Activated CD4-positive, alpha-beta memory T cell treated with anti-CD3 and anti-CD28 coated beads, Interleukin-2, amount 10 ng/mL, durations not matched to agents 7 days and 5 days (primary cell): ENCODE measurements at regions of chr20 and their contacts with region 1.

Region 1: DNA sequence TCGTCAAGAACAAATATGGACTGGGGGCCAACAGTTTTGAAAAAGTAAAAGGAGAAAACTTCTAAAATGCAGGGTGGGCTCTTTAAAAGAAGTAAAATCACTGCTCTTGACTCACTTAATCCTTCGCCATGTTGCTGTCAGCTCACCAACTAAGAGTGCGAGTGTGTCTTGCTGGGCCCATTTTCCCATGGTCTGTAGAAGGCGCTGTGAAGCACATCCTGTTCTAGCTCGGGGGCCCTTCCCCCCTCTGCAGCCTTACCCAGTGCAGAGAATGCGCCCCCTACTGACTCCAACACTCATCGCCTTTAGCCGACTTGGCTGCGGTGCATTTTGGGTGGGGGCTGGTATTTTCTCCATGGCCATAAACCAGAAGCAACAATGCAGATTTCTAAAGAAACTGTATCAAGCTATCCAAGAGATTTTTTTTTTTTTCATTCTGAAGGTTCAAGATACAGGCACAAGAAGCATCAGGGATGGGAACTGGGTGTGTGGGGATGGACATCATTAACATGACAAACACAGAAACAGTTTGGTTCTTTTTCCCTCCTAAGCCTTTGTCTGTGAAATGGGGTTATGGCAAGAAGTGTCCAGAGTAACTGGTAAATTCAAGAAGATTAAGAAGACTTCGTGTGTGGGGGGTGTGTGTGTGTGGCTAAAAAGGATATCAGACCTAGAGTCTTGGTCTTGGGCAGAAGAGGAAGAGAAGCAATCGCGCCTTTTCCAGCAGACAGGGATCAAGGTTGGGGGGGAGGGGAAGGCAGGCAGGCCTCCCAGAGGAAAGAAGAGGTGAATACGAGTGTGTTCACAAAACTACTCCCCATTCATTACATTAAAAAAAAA is 1.7 kb downstream of the ADNP start:
- DNase-seq: peak; percentile 96
- H3K4me3 Mint-ChIP-seq: peak overlapping the region; percentile 91
- H3K27ac Mint-ChIP-seq: peak overlapping the region; percentile 96
- H3K4me1 Mint-ChIP-seq: peaks cover 56% of the 10 kb centered on the region
- H3K27me3 Mint-ChIP-seq: no peaks in the 10 kb centered on the region

Region 2: GRCh38 chr20:50690634-50691572 is 238.6 kb before region 1 on chr20 and contains the start of gene RIPOR3:
- CTCF ChIA-PET with region 1: no interaction called
- POLR2A ChIA-PET with region 1: no interaction called
- DNase-seq: no peak
- H3K4me3 Mint-ChIP-seq: no peak within 1 kb of the TSS
- H3K27ac Mint-ChIP-seq: no peak within 1 kb of the TSS
- H3K4me1 Mint-ChIP-seq: peaks cover 7% of the 10 kb centered on the region
- H3K27me3 Mint-ChIP-seq: peaks cover 53% of the 10 kb centered on the region
- total RNA-seq, gene RIPOR3: not detected

Region 3: GRCh38 chr20:50815162-50815989 is 114.1 kb before region 1 on chr20:
- CTCF ChIA-PET with region 1: interaction called, 15 read pairs
- POLR2A ChIA-PET with region 1: interaction called, 9 read pairs
- DNase-seq: no peak
- H3K4me3 Mint-ChIP-seq: no peak overlapping the region
- H3K27ac Mint-ChIP-seq: no peak overlapping the region
- H3K4me1 Mint-ChIP-seq: peaks cover 30% of the 10 kb centered on the region
- H3K27me3 Mint-ChIP-seq: no peaks in the 10 kb centered on the region

Region 4: DNA sequence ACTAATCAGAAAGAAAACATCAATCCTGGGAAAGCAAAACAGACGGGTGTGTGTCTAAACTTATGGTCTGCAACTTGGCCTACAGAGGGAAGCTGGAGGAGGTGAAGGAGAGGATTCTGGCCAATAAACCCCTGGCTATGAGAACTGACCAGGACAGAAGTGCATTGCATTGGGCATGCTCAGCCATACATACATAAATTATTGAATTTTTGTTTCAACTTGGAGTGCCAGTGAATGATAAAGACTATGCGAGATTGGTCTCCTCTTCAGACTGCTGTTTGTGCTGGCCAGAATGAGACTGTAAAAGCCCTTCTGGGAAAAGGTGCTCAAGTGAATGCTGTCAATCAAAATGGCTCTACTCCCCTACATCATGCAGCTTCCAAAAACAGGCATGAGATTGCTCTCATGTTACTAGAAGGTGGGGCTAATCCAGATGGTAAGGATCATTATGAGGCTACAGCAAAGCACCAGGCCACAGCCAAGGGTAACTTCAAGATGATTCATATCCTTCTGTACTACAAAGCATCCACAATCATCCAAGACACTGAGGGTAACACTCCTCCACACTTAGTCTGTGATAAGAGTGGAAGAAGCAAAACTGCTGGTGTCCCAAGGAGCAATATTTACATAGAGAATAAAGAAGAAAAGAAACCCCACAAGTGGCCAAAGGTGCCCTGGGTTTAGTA is 15.7 kb before region 1 on chr20:
- CTCF ChIA-PET with region 1: interaction called, 32 read pairs
- POLR2A ChIA-PET with region 1: interaction called, 45 read pairs
- DNase-seq: peak; percentile 27
- H3K4me3 Mint-ChIP-seq: no peak overlapping the region
- H3K27ac Mint-ChIP-seq: peak overlapping the region; percentile 63
- H3K4me1 Mint-ChIP-seq: peaks cover 69% of the 10 kb centered on the region
- H3K27me3 Mint-ChIP-seq: no peaks in the 10 kb centered on the region

Region 5: GRCh38 chr20:51022803-51023630 is 93.5 kb after region 1 on chr20 and contains the start of gene KCNG1:
- CTCF ChIA-PET with region 1: no interaction called
- POLR2A ChIA-PET with region 1: no interaction called
- DNase-seq: peak; percentile 62
- H3K4me3 Mint-ChIP-seq: peak within 1 kb of the TSS; percentile 52
- H3K27ac Mint-ChIP-seq: no peak within 1 kb of the TSS
- H3K4me1 Mint-ChIP-seq: peaks cover 10% of the 10 kb centered on the region
- H3K27me3 Mint-ChIP-seq: peaks cover 61% of the 10 kb centered on the region
- total RNA-seq, gene KCNG1: 0.13 to 0.30 TPM